Esophagus squamous epithelium (tissue), 5 donors: ENCODE measurements at regions of chr20 and their contacts with region 1.

Region 1: DNA sequence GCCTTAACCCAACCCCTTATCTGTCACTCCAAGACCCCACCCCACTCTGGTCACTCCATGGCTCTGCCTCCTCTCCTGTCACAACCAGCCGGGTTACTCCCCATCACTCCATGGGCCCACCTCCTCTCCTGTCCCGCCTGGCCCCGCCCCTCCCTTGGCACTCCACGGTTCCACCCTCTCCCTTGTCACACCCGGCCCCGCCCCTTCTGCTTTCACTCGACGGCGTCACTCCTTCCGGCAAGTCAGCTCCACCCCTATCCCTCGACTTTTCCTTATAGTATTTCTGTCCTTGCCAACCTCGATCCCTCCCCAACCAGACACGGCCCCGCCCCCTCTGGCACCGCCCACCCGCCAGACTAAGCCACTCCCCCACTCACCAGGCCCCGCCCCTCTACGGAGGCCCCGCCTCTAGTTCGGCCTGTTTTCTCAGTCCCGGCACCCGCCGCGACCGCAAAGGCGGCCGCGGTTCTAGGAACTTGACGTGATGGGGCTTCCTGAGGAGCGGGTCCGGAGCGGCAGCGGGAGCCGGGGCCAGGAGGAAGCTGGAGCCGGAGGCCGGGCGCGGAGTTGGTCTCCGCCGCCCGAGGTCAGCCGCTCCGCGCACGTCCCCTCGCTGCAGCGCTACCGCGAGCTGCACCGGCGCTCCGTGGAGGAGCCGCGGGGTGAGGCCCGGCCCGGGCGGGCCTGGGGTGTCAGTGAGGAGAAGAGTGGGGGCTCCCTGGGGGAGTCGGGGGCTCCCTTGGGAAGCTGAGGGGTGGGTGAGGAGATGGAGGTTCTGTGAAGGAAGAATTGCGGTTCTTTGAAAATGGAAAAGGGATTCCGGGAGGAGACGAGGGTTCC is at the start of gene ACSS2:
- DNase-seq: peak; percentile 94
- H3K4me3 ChIP-seq: peak within 1 kb of the TSS; percentile 67 to 96 (median 81)
- H3K27ac ChIP-seq: peak within 1 kb of the TSS; percentile 89 to 94 (median 92)
- H3K4me1 ChIP-seq: peaks cover 16 to 82% (median 39%) of the 10 kb centered on the region in 3 donors
- H3K27me3 ChIP-seq: no peaks in the 10 kb centered on the region
- CTCF ChIP-seq: peak in 1 of 6 experiments; percentile 3
- POLR2A ChIP-seq: peak in 2 of 4 donors; percentile 73 to 86
- total RNA-seq, gene ACSS2: 29.5 to 69.1 (median 43.6) TPM

Region 2: GRCh38 chr20:34654207-34654744 is 222.1 kb before region 1 on chr20:
- intact Hi-C with region 1: no loop called
- DNase-seq: no peak
- H3K4me3 ChIP-seq: no peak overlapping the region
- H3K27ac ChIP-seq: no peak overlapping the region
- H3K4me1 ChIP-seq: no peaks in the 10 kb centered on the region
- H3K27me3 ChIP-seq: no peaks in the 10 kb centered on the region
- CTCF ChIP-seq: no peak
- POLR2A ChIP-seq: no peak

Region 3: DNA sequence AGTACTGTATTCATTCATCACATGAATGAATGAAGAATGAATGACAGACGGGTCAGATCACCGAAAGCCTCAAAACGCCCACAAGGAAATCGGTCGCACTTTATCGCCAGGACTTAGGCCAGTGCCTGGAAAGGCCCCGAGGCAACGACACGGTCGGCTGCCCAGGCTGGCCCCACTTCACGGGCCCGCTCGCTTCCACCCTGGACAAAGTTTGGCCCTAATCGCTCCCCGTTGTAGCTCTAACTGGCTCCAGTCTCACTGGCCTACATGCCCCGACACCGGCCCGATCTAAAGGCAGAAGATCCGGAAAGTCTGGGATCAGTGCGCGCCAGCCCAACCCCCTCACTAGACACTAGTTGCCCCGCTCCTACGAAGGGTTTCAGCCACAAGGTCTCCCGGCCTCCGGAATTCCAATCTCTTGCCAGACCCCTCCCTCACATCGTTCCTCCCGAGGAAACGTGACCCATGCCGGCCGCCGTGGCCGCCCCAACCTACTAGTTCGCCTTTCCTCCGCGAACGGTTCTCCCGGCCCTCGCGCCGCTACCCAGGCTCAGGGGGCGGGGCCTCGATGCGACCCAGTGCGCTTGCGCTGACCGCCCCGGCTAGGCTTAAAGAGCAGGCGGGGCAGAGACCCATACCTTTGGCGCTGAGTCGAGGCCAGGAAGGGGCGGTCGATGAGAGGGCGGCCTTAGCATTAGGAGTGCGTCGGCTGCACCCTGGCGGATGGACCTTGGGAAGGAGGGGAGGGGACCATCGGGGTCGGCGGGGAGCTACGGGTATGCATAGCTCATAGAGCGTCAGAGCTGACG is 79.1 kb after region 1 on chr20 and contains the starts of genes GSS and MYH7B:
- intact Hi-C with region 1: loop called (anchors 5 kb)
- DNase-seq: peak; percentile 67
- H3K4me3 ChIP-seq: peak within 1 kb of the TSS; percentile 52 to 88 (median 66)
- H3K27ac ChIP-seq: peak within 1 kb of the TSS; percentile 85 to 98 (median 92)
- H3K4me1 ChIP-seq: peaks cover 5 to 53% (median 21%) of the 10 kb centered on the region in 3 donors
- H3K27me3 ChIP-seq: no peaks in the 10 kb centered on the region
- CTCF ChIP-seq: peak in 5 of 6 experiments; percentile 40 to 72 (median 61)
- POLR2A ChIP-seq: peak in 3 of 4 donors; percentile 64 to 89 (median 89)
- total RNA-seq, gene GSS: 61.3 to 75.2 (median 64.5) TPM
- total RNA-seq, gene MYH7B: 0.19 TPM in 1 of 4 donors, not detected in the others

Region 4: GRCh38 chr20:35092524-35093266 is 216.3 kb after region 1 on chr20 and contains the start of gene TRPC4AP:
- intact Hi-C with region 1: loop called (anchors 10 kb)
- DNase-seq: peak; percentile 73
- H3K4me3 ChIP-seq: peak within 1 kb of the TSS; percentile 75 to 90 (median 80)
- H3K27ac ChIP-seq: peak within 1 kb of the TSS; percentile 92 to 95 (median 93)
- H3K4me1 ChIP-seq: peaks cover 12 to 66% (median 22%) of the 10 kb centered on the region in 3 donors
- H3K27me3 ChIP-seq: no peaks in the 10 kb centered on the region
- CTCF ChIP-seq: peak; percentile 92 to 99 (median 99)
- POLR2A ChIP-seq: peak in 2 of 4 donors; percentile 36 to 90
- total RNA-seq, gene TRPC4AP: 35.2 to 50.4 (median 47.2) TPM